Activated naive CD4-positive, alpha-beta T cell treated with anti-CD3 and anti-CD28 coated beads for 36 hours (primary cell): ENCODE measurements at regions of chr21 and their contacts with region 1.

Region 1: GRCh38 chr21:29372063-29372802 is 73.5 kb downstream of the BACH1 start:
- DNase-seq: peak; percentile 67
- H3K4me3 Mint-ChIP-seq: no peak overlapping the region
- H3K27ac Mint-ChIP-seq: peak overlapping the region; percentile 60
- H3K4me1 Mint-ChIP-seq: peaks cover 25% of the 10 kb centered on the region
- H3K27me3 Mint-ChIP-seq: no peaks in the 10 kb centered on the region

Region 2: GRCh38 chr21:29073222-29074006 is 298.8 kb before region 1 on chr21 and contains the start of gene CCT8:
- CTCF ChIA-PET with region 1: interaction called, 6 read pairs
- intact Hi-C with region 1: loop called (anchors 1 kb)
- DNase-seq: peak; percentile 99
- H3K4me3 Mint-ChIP-seq: peak within 1 kb of the TSS; percentile 94
- H3K27ac Mint-ChIP-seq: peak within 1 kb of the TSS; percentile 95
- H3K4me1 Mint-ChIP-seq: peaks cover 46% of the 10 kb centered on the region
- H3K27me3 Mint-ChIP-seq: no peaks in the 10 kb centered on the region
- total RNA-seq, gene CCT8: 482 to 515 TPM

Region 3: GRCh38 chr21:29085106-29085752 is 287.0 kb before region 1 on chr21:
- CTCF ChIA-PET with region 1: interaction called, 22 read pairs
- intact Hi-C with region 1: loop called (anchors 1 kb)
- DNase-seq: no peak
- H3K4me3 Mint-ChIP-seq: no peak overlapping the region
- H3K27ac Mint-ChIP-seq: no peak overlapping the region
- H3K4me1 Mint-ChIP-seq: peaks cover 20% of the 10 kb centered on the region
- H3K27me3 Mint-ChIP-seq: no peaks in the 10 kb centered on the region

Region 4: GRCh38 chr21:29164325-29164942 is 207.8 kb before region 1 on chr21:
- CTCF ChIA-PET with region 1: interaction called, 41 read pairs
- intact Hi-C with region 1: loop called (anchors 1 kb)
- DNase-seq: no peak
- H3K4me3 Mint-ChIP-seq: no peak overlapping the region
- H3K27ac Mint-ChIP-seq: no peak overlapping the region
- H3K4me1 Mint-ChIP-seq: no peaks in the 10 kb centered on the region
- H3K27me3 Mint-ChIP-seq: no peaks in the 10 kb centered on the region

Region 5: DNA sequence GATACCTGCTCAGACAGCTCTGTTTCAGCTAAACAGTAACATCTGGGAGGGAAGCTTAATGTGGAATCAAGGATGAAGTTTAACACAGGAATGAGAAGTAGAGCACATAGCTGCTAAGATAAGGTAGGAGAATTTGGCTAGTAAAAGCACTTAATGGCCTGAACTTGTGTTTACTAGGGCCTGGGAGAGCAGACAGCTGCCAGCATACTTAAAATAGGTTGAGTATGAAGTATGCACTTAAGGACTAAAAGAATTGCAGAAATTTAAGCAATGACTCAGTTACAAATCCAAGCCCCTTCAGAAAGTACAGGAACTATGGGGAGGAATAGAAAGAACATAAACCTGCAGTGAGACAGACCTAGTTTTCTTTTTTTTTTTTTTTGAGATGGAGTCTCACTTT is 20.5 kb before region 1 on chr21:
- CTCF ChIA-PET with region 1: interaction called, 14 read pairs
- intact Hi-C with region 1: loop called (anchors 1 kb)
- DNase-seq: no peak
- H3K4me3 Mint-ChIP-seq: no peak overlapping the region
- H3K27ac Mint-ChIP-seq: no peak overlapping the region
- H3K4me1 Mint-ChIP-seq: peaks cover 19% of the 10 kb centered on the region
- H3K27me3 Mint-ChIP-seq: no peaks in the 10 kb centered on the region

Region 6: DNA sequence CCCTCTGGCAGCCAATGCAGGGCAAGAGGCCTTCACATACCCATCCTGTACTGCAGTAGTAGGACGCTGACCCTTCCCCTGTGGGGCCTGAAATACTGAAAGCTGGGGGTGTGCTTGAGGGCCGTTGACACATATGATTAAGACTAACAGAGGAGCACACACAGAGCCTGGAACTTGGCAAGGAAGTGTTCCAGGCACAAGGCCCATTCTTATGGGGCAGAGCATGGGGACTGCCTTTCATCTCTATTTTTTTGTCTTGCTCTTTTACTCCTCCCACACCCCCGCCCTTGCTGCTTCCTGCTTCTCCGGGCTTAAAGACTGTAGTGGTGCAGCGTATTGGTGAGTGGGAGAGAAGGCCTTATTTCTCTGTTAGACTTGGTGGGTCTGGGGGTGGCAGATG is 63.9 kb after region 1 on chr21:
- CTCF ChIA-PET with region 1: no interaction called
- intact Hi-C with region 1: loop called (anchors 2 kb)
- DNase-seq: peak; percentile 78
- H3K4me3 Mint-ChIP-seq: peak overlapping the region; percentile 76
- H3K27ac Mint-ChIP-seq: peak overlapping the region; percentile 83
- H3K4me1 Mint-ChIP-seq: peaks cover 50% of the 10 kb centered on the region
- H3K27me3 Mint-ChIP-seq: no peaks in the 10 kb centered on the region